MCF 10A (cell line): ENCODE measurements at regions of chr1 and their contacts with region 1.

Region 1: GRCh38 chr1:165659581-165659895 is 28.5 kb downstream of the MGST3 start:
- DNase-seq: no peak
- H3K4me3 Mint-ChIP-seq: no peak overlapping the region
- H3K27ac Mint-ChIP-seq: no peak overlapping the region
- H3K4me1 Mint-ChIP-seq: no peaks in the 10 kb centered on the region
- H3K27me3 Mint-ChIP-seq: no peaks in the 10 kb centered on the region
- CTCF ChIP-seq: no peak

Region 2: DNA sequence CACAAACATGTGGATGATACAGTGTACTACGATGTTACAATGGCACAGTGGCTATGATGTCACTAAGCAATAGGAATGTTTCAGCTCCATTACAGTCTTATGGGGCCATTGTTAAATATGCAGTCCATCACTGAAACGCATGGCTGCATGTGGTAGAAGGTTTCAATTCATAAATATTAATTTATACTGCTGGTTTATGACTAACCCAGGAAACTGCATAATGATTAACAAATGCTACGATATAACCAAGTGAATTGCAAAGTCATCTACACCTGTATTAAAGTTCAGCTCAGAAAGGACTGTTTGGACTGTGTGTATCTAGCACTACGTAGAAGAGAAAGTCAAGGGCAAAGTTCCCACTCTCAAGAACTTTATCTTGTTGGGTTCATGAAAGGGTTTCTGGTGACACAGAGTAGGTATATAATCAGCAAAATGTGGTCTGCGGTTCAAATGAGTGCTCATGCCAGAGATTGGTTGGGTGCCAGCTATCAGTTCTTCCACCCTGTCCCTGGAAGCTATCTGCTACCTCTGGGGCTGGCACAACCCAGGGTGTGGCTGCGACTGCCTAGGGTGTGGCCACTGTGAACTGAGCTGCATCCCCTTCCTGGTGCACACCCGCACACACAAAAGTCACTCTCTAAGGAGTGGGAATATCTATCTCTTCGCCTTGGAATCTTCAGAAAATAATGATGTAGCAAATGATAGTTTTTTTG is 13.7 kb before region 1 on chr1:
- CTCF ChIA-PET with region 1: interaction called, 26 read pairs
- POLR2A ChIA-PET with region 1: interaction called, 7 read pairs
- intact Hi-C with region 1: no loop called
- DNase-seq: peak; percentile 42
- H3K4me3 Mint-ChIP-seq: no peak overlapping the region
- H3K27ac Mint-ChIP-seq: no peak overlapping the region
- H3K4me1 Mint-ChIP-seq: peaks cover 17% of the 10 kb centered on the region
- H3K27me3 Mint-ChIP-seq: no peaks in the 10 kb centered on the region
- CTCF ChIP-seq: no peak